Transverse colon (tissue), 4 donors: ENCODE measurements at regions of chr4 and their contacts with region 1.

Region 1: DNA sequence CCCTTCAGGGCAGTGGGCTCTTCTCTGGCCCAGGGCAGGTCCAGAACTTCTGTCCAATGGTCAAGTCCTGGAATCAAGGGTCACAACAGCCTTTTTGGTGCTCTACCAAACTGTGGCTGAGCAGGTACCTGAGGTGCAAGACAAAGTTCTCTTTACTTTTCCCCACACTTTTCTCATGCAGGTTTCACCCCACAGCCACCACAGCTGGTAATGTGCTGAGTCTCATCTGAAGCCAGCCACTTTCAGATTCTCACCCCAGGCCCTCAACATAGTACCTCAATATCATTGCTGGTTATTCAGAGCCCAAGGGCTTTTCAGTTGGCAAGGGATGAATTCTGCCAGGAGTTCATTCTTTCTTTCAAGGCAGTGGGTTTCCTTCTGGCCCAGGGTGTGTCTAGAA is 426.0 kb downstream of the TECRL start:
- DNase-seq: no peak
- H3K4me3 ChIP-seq: no peak overlapping the region
- H3K27ac ChIP-seq: no peak overlapping the region
- H3K4me1 ChIP-seq: no peaks in the 10 kb centered on the region
- H3K27me3 ChIP-seq: no peaks in the 10 kb centered on the region
- CTCF ChIP-seq: no peak
- EP300 ChIP-seq: no peak
- POLR2A ChIP-seq: no peak

Region 2: DNA sequence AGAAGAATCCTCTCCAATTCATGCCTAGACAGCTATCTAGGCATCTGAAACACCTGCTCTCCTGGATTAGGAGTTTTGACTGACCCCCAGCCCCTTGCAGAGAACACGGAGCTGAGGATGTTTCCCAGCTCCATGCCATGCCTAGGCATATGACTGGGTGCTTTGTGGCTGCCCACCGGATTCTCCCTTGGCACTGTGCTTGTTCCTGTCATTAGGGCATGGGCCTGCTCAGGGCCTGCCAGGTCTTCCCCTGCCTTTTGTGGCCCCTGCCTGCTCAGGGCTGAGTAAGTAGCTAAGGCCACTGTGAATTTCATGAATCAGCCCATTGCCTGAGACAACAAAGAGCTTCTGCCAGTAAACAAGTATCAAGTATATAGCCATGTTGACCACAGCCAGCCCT is 441.4 kb before region 1 on chr4:
- in situ Hi-C with region 1: no loop called
- intact Hi-C with region 1: loop called (anchors 5 kb)
- DNase-seq: no peak
- H3K4me3 ChIP-seq: no peak overlapping the region
- H3K27ac ChIP-seq: no peak overlapping the region
- H3K4me1 ChIP-seq: no peaks in the 10 kb centered on the region
- H3K27me3 ChIP-seq: no peaks in the 10 kb centered on the region
- CTCF ChIP-seq: no peak
- EP300 ChIP-seq: no peak
- POLR2A ChIP-seq: no peak